Heart left ventricle (tissue), 16 donors: ENCODE measurements at regions of chr10 and their contacts with region 1.

Region 1: GRCh38 chr10:25582961-25583360 is 351.1 kb upstream of the MYO3A start:
- DNase-seq: no peak
- ATAC-seq: no peak
- H3K4me3 ChIP-seq: no peak overlapping the region
- H3K27ac ChIP-seq: no peak overlapping the region
- H3K4me1 ChIP-seq: no peaks in the 10 kb centered on the region
- H3K27me3 ChIP-seq: no peaks in the 10 kb centered on the region
- CTCF ChIP-seq: no peak
- POLR2A ChIP-seq: no peak

Region 2: DNA sequence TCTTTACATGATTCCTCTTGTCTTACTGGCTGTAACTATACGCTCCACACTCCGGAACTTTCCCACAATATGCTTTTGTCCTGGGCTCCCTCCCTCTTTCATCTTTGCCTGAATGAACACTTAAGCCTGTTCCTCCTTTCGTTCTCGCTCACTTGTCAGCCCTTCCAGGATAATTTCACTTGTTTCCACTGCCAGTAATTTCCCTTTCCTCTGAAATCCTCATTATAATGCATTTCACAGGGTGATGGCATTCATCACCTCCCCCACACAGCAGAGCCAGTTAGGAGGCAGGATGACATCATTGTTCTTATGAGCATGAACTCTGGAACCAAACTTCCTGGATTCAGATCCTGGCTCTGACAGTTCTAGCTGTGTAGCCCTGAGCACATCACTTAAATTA is 35.6 kb before region 1 on chr10:
- intact Hi-C with region 1: no loop called
- DNase-seq: no peak
- ATAC-seq: no peak
- H3K4me3 ChIP-seq: no peak overlapping the region
- H3K27ac ChIP-seq: no peak overlapping the region
- H3K4me1 ChIP-seq: no peaks in the 10 kb centered on the region
- H3K27me3 ChIP-seq: peaks cover 0 to 3% (median 0%) of the 10 kb centered on the region in 9 donors
- CTCF ChIP-seq: no peak
- POLR2A ChIP-seq: no peak

Region 3: DNA sequence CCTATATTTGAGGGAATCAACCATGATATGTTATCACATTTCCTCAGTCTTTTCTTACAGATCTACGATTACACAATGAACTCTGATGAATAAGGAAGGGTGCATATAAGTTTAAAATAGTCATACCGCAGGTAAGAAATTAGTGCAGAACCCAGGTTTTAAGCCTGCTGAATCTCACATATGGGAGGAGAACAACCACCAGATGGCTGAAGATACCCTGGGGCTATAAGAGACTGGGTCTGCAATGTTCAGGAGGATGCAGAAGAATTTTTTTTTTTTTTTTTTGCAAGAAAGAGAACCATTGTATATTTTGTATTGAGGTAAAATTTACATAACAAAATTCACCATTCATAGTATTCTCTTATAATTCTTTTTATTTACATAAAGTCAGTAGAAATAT is 21.2 kb before region 1 on chr10:
- intact Hi-C with region 1: no loop called
- DNase-seq: no peak
- ATAC-seq: no peak
- H3K4me3 ChIP-seq: no peak overlapping the region
- H3K27ac ChIP-seq: no peak overlapping the region
- H3K4me1 ChIP-seq: no peaks in the 10 kb centered on the region
- H3K27me3 ChIP-seq: no peaks in the 10 kb centered on the region
- CTCF ChIP-seq: no peak
- POLR2A ChIP-seq: no peak

Region 4: DNA sequence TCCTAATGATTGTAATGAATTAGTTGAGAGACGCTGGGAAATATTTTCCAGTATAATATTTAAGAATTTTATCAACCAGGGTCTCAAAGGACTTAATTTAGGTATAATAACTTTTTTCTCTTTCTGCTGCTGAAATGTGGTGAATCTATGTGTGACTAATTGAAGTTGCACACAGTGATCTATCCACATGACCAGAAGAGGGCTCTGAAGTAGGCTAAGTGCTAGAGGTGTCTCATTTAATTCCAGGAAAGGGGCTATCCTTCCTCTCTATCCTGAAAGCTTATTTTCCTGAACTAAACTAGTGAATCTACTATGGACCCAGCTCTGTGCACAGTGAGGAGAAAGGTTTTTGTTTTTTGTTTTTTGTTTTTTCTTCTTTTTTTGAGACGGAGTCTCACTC is 56.7 kb after region 1 on chr10:
- intact Hi-C with region 1: loop called in 1 of 10 experiments (anchors 10 kb)
- DNase-seq: no peak
- ATAC-seq: no peak
- H3K4me3 ChIP-seq: no peak overlapping the region
- H3K27ac ChIP-seq: no peak overlapping the region
- H3K4me1 ChIP-seq: no peaks in the 10 kb centered on the region
- H3K27me3 ChIP-seq: no peaks in the 10 kb centered on the region
- CTCF ChIP-seq: no peak
- POLR2A ChIP-seq: no peak